Esophagus squamous epithelium (tissue), 5 donors: ENCODE measurements at regions of chr20 and their contacts with region 1.

Region 1: DNA sequence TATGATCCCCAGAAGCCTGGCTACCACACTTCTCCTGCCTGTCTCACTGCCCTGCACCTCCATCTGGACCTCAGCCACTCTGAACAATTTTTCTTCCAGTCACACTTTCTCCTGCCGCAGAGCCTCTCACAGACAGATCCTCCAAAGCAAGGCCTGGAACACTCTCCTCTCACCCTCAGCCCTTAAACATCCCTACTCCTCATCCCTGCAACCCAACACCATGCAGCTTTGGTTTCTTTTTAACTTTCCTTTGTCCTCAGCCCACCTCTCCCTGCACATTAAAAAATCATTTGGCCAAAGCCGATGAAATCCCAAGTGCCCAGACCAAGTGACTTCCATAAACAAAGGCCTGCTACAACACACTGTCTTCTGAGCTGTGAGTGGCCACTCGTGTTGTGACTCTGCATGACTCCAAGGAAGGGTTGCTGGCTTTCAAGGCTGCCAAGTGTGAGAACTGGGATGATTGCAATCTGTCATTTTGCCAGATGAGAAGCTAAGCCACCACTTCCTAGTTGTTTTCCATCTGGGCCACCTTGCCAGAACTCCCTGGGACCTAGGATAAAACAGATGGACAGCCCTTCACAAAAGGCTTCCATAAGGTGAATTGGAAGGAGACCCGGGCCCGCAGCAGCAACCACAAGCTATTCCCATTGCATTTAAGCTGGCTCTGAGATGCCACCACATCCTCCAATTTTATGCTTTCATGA is 144.4 kb upstream of the SSTR4 start:
- DNase-seq: no peak
- H3K4me3 ChIP-seq: no peak overlapping the region
- H3K27ac ChIP-seq: no peak overlapping the region
- H3K4me1 ChIP-seq: no peaks in the 10 kb centered on the region
- H3K27me3 ChIP-seq: peaks cover 0 to 4% (median 0%) of the 10 kb centered on the region in 4 donors
- CTCF ChIP-seq: no peak
- POLR2A ChIP-seq: no peak

Region 2: GRCh38 chr20:22815603-22816315 is 75.0 kb before region 1 on chr20:
- intact Hi-C with region 1: no loop called
- DNase-seq: no peak
- H3K4me3 ChIP-seq: no peak overlapping the region
- H3K27ac ChIP-seq: no peak overlapping the region
- H3K4me1 ChIP-seq: peaks cover 2 to 9% (median 4%) of the 10 kb centered on the region in 3 donors
- H3K27me3 ChIP-seq: no peaks in the 10 kb centered on the region
- CTCF ChIP-seq: peak in 2 of 6 experiments; percentile 5 to 11
- POLR2A ChIP-seq: no peak

Region 3: DNA sequence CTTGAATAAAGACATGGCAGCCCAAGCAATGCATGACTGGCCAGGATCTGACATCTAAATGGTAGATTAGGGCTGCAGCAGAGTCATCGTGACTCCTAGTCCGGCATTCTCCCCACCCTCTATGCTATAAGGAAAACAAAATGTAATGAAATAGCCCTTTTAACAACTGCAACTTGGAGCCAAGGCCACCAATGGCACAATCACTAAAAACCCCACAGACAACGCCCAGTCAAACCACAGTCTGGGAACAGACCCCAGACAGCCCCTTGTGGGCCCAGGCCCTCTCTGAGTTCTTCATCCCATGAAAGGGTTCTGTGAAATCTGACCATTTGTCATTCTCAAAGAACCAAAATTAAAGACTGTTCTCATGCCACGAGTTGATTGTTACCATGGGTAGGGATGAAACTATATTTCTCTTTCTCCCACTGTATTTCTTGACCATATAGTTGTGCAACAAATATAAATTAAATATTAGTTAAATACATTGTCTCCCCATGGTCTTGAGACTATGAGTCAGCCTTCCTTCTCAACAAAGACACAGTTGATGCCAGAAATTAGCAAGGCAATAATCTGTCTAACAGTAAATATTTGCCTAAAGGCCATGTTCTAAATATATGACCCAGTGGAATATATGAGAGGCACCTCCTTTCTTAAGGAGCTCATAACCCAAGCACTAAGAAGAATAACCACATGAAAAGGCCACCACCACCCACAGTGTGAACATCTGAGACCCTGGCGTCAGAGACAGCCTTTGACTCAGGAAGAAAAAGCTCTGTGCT is 58.8 kb after region 1 on chr20:
- intact Hi-C with region 1: loop called (anchors 10 kb)
- DNase-seq: no peak
- H3K4me3 ChIP-seq: no peak overlapping the region
- H3K27ac ChIP-seq: no peak overlapping the region
- H3K4me1 ChIP-seq: no peaks in the 10 kb centered on the region
- H3K27me3 ChIP-seq: peaks cover 0 to 16% (median 0%) of the 10 kb centered on the region in 4 donors
- CTCF ChIP-seq: no peak
- POLR2A ChIP-seq: no peak